ENCODE measurements at regions of chr3 and their contacts with region 1.

Region 1: DNA sequence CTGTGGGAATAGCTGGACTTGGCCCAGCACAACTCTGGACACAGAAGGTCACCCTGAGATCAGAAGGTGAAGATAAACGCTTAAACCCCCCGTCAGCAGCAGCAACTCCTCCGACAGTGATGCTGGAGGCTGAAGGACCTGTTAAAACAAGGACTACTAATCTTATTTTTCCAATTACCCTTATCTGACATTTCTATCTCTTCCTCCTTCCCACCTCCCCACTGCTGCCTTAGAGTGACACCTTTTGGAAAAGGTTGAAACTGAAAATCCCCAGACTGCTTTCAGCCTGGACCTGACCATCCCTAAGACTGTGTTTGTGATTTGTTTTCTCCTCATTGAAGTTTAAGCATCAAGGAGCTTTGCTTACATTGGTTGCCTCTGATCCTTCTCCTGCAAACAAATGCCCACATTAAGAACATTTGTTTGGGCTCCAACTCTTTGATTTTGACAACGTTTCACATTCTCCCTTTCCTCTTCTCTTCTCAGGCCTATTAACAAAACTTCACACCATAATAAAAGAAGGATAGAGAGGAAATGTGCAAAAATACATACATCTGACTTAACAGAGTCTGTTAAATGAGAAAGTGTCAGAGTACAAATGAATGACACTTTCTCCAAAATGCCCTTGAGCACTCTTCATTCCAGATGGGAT is 410.6 kb upstream of the WNT5A start:
- DNase-seq: peak; percentile 20 to 45
- H3K4me3 ChIP-seq: no peak overlapping the region
- H3K27ac ChIP-seq: no peak overlapping the region
- H3K4me1 ChIP-seq: peaks cover 9% of the 10 kb centered on the region; the same call in 1 of the 2 replicates
- H3K27me3 ChIP-seq: no peaks in the 10 kb centered on the region
- CTCF ChIP-seq: peak; percentile 78

Region 2: GRCh38 chr3:54427941-54428871 is 1469.5 kb before region 1 on chr3:
- CTCF ChIA-PET with region 1: no interaction called
- POLR2A ChIA-PET with region 1: no interaction called
- intact Hi-C with region 1: loop called (anchors 5 kb)
- DNase-seq: peak in 1 of 2 experiments; percentile 37
- H3K4me3 ChIP-seq: no peak overlapping the region
- H3K27ac ChIP-seq: no peak overlapping the region
- H3K4me1 ChIP-seq: no peaks in the 10 kb centered on the region
- H3K27me3 ChIP-seq: peaks cover 6% of the 10 kb centered on the region; the same call in 1 of the 2 replicates
- CTCF ChIP-seq: peak; percentile 74

Region 3: GRCh38 chr3:54870423-54870822 is 1027.3 kb before region 1 on chr3:
- CTCF ChIA-PET with region 1: no interaction called
- POLR2A ChIA-PET with region 1: no interaction called
- intact Hi-C with region 1: loop called (anchors 5 kb)
- DNase-seq: peak; percentile 48 to 72
- H3K4me3 ChIP-seq: no peak overlapping the region
- H3K27ac ChIP-seq: no peak overlapping the region; the same call in 1 of the 2 replicates
- H3K4me1 ChIP-seq: peaks cover 17% of the 10 kb centered on the region
- H3K27me3 ChIP-seq: no peaks in the 10 kb centered on the region
- CTCF ChIP-seq: peak; percentile 68

Region 4: GRCh38 chr3:55620351-55621025 is 277.2 kb before region 1 on chr3:
- CTCF ChIA-PET with region 1: no interaction called
- POLR2A ChIA-PET with region 1: no interaction called
- intact Hi-C with region 1: loop called (anchors 1 kb)
- DNase-seq: peak; percentile 79 to 95
- H3K4me3 ChIP-seq: peak overlapping the region; percentile 21; the same call in 1 of the 2 replicates
- H3K27ac ChIP-seq: peak overlapping the region; percentile 100
- H3K4me1 ChIP-seq: peaks cover 82% of the 10 kb centered on the region
- H3K27me3 ChIP-seq: no peaks in the 10 kb centered on the region
- CTCF ChIP-seq: no peak

Region 5: GRCh38 chr3:56042326-56042951 is 144.7 kb after region 1 on chr3:
- CTCF ChIA-PET with region 1: no interaction called
- POLR2A ChIA-PET with region 1: no interaction called
- intact Hi-C with region 1: loop called (anchors 10 kb)
- DNase-seq: peak; percentile 1 to 50
- H3K4me3 ChIP-seq: no peak overlapping the region
- H3K27ac ChIP-seq: no peak overlapping the region
- H3K4me1 ChIP-seq: no peaks in the 10 kb centered on the region
- H3K27me3 ChIP-seq: peaks cover 3% of the 10 kb centered on the region; the same call in 1 of the 2 replicates
- CTCF ChIP-seq: peak; percentile 71

Measured in PC-9 (cell line).